ENCODE measurements at regions of chr19 and their contacts with region 1.

Region 1: DNA sequence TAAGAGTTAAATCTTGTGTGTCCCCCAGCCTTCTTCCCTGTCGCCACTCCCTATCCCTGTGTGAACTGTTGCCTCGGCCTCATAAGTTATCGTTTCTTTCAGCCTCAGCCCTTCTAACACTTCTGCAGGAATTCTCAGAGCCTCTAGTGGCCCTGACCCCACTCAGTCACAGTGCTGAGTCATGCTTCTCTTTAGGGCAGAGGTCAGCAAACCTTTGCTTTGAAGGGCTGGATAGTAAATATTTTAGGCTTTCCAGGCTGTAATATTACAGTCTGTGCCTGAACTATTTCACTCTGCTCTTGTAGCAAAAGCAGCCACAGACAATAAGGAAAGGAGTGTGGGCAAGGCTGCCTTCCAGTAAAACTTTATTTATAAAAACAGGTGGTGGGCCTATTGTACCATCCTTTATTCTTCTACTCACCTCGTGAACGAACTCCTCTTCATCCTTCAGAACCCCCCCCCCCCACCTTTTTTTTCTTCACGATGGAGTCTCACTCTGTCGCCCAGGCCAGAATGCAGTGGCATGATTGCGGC is 22.1 kb downstream of the MYO9B start:
- DNase-seq: peak; percentile 53
- ATAC-seq: peak; percentile 87
- H3K4me3 ChIP-seq: peak overlapping the region; percentile 32; the same call in 1 of the 2 replicates
- H3K27ac ChIP-seq: peak overlapping the region; percentile 19; the same call in 1 of the 2 replicates
- H3K4me1 ChIP-seq: peaks cover 11% of the 10 kb centered on the region
- H3K27me3 ChIP-seq: no peaks in the 10 kb centered on the region
- CTCF ChIP-seq: no peak

Region 2: GRCh38 chr19:17260842-17261325 is 163.2 kb after region 1 on chr19:
- CTCF ChIA-PET with region 1: no interaction called
- POLR2A ChIA-PET with region 1: interaction called, 31 read pairs
- intact Hi-C with region 1: no loop called
- DNase-seq: peak; percentile 89
- ATAC-seq: peak; percentile 100
- H3K4me3 ChIP-seq: no peak overlapping the region
- H3K27ac ChIP-seq: no peak overlapping the region
- H3K4me1 ChIP-seq: no peaks in the 10 kb centered on the region
- H3K27me3 ChIP-seq: no peaks in the 10 kb centered on the region
- CTCF ChIP-seq: peak; percentile 94

Measured in PC-3 (cell line).